IMR-90 (cell line): ENCODE measurements at regions of chr18 and their contacts with region 1.

Region 1: GRCh38 chr18:13726232-13726971 is at the starts of genes FAM210A and RNMT:
- DNase-seq: peak; percentile 96
- ATAC-seq: peak; percentile 95
- H3K4me3 ChIP-seq: peak within 1 kb of the TSS; percentile 80
- H3K27ac ChIP-seq: peak within 1 kb of the TSS; percentile 84
- H3K4me1 ChIP-seq: no peaks in the 10 kb centered on the region
- H3K27me3 ChIP-seq: no peaks in the 10 kb centered on the region
- CTCF ChIP-seq: peak; percentile 9; the same call in 1 of the 2 replicates
- POLR2A ChIP-seq: peak; percentile 96
- RAD21 ChIP-seq: no peak
- total RNA-seq, gene FAM210A: 16.1 and 25.3 TPM in 2 replicates
- total RNA-seq, gene RNMT: 13.3 and 21.1 TPM in 2 replicates

Region 2: GRCh38 chr18:12990967-12991838 is 735.2 kb before region 1 on chr18 and contains the start of gene CEP192:
- CTCF ChIA-PET with region 1: interaction called, 3 read pairs
- POLR2A ChIA-PET with region 1: no interaction called
- dilution Hi-C with region 1: no loop called
- in situ Hi-C with region 1: loop called (anchors 25 kb)
- intact Hi-C with region 1: no loop called
- DNase-seq: peak; percentile 98
- ATAC-seq: peak; percentile 97
- H3K4me3 ChIP-seq: peak within 1 kb of the TSS; percentile 91
- H3K27ac ChIP-seq: peak within 1 kb of the TSS; percentile 94
- H3K4me1 ChIP-seq: peaks cover 8% of the 10 kb centered on the region
- H3K27me3 ChIP-seq: no peaks in the 10 kb centered on the region
- CTCF ChIP-seq: no peak
- POLR2A ChIP-seq: peak; percentile 84
- RAD21 ChIP-seq: no peak
- total RNA-seq, gene CEP192: 29.0 and 34.2 TPM in 2 replicates

Region 3: GRCh38 chr18:13558124-13558523 is 168.3 kb before region 1 on chr18:
- CTCF ChIA-PET with region 1: no interaction called
- POLR2A ChIA-PET with region 1: no interaction called
- dilution Hi-C with region 1: no loop called
- in situ Hi-C with region 1: no loop called
- intact Hi-C with region 1: loop called (anchors 2 kb)
- DNase-seq: peak; percentile 11
- ATAC-seq: peak; percentile 82
- H3K4me3 ChIP-seq: no peak overlapping the region
- H3K27ac ChIP-seq: no peak overlapping the region
- H3K4me1 ChIP-seq: no peaks in the 10 kb centered on the region
- H3K27me3 ChIP-seq: peaks cover 6% of the 10 kb centered on the region; the same call in 1 of the 2 replicates
- CTCF ChIP-seq: peak; percentile 41
- POLR2A ChIP-seq: no peak
- RAD21 ChIP-seq: peak; percentile 44